ENCODE measurements at regions of chr17 and their contacts with region 1.

Region 1: DNA sequence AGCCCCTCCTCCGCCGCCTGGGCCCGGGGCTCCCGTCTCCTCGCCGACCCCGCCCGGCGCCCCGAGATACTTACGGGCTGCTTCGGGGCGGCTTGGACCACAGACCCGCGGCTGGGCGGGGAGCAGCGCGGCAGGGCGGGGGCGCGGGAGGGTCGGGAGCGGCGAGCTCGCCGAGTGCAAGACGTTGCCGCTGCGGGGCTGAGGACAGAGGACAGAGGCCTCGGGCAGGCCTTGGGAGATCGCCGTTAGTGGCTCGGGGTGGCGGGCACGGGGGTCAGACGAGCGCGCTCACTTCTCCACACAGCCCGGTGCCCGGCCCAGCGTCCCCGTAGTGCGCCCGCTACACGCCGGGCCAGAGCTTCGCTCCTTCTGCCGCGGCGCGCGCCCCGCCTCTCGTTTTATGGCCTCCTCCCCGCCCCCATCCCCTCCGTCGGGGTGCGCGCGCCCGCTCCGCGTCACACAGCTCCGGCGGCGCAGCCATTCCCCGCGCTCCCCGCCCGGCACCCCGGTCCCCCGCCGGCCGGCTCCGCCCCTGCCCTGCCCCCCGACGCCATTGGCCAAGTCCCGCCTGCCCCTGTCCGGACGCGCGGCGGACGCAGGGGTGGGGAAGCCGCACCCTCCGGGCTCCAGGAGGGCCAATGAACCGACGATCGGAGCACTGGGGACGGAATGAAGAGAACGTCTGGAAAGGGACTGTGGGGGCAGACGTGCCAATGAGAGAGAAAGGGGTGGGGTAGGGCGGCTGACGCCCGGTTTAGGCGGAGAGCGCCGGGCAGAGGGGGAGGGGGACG is at the start of gene TOB1:
- DNase-seq: peak; percentile 98
- H3K4me3 Mint-ChIP-seq: peak within 1 kb of the TSS; percentile 100
- H3K27ac Mint-ChIP-seq: peak within 1 kb of the TSS; percentile 99
- H3K4me1 Mint-ChIP-seq: peaks cover 43% of the 10 kb centered on the region
- H3K27me3 Mint-ChIP-seq: no peaks in the 10 kb centered on the region
- total RNA-seq, gene TOB1: 42.3 to 44.1 TPM

Region 2: GRCh38 chr17:50790618-50791017 is 75.6 kb before region 1 on chr17:
- CTCF ChIA-PET with region 1: no interaction called
- POLR2A ChIA-PET with region 1: no interaction called
- intact Hi-C with region 1: no loop called
- DNase-seq: no peak
- H3K4me3 Mint-ChIP-seq: no peak overlapping the region
- H3K27ac Mint-ChIP-seq: no peak overlapping the region
- H3K4me1 Mint-ChIP-seq: no peaks in the 10 kb centered on the region
- H3K27me3 Mint-ChIP-seq: no peaks in the 10 kb centered on the region

Region 3: GRCh38 chr17:50853015-50853615 is 13.1 kb before region 1 on chr17:
- CTCF ChIA-PET with region 1: interaction called, 80 read pairs
- POLR2A ChIA-PET with region 1: interaction called, 52 read pairs
- intact Hi-C with region 1: loop called (anchors 1 kb)
- DNase-seq: no peak
- H3K4me3 Mint-ChIP-seq: no peak overlapping the region
- H3K27ac Mint-ChIP-seq: no peak overlapping the region
- H3K4me1 Mint-ChIP-seq: peaks cover 14% of the 10 kb centered on the region
- H3K27me3 Mint-ChIP-seq: no peaks in the 10 kb centered on the region

Region 4: GRCh38 chr17:50909765-50910605 is 43.8 kb after region 1 on chr17:
- CTCF ChIA-PET with region 1: interaction called, 5 read pairs
- POLR2A ChIA-PET with region 1: interaction called, 44 read pairs
- intact Hi-C with region 1: loop called (anchors 1 kb)
- DNase-seq: peak; percentile 93
- H3K4me3 Mint-ChIP-seq: no peak overlapping the region
- H3K27ac Mint-ChIP-seq: peak overlapping the region; percentile 74
- H3K4me1 Mint-ChIP-seq: peaks cover 55% of the 10 kb centered on the region
- H3K27me3 Mint-ChIP-seq: no peaks in the 10 kb centered on the region

Region 5: GRCh38 chr17:50944054-50944901 is 78.1 kb after region 1 on chr17:
- CTCF ChIA-PET with region 1: interaction called, 153 read pairs
- POLR2A ChIA-PET with region 1: interaction called, 44 read pairs
- intact Hi-C with region 1: loop called (anchors 1 kb)
- DNase-seq: peak; percentile 88
- H3K4me3 Mint-ChIP-seq: peak overlapping the region; percentile 76
- H3K27ac Mint-ChIP-seq: peak overlapping the region; percentile 86
- H3K4me1 Mint-ChIP-seq: peaks cover 23% of the 10 kb centered on the region
- H3K27me3 Mint-ChIP-seq: no peaks in the 10 kb centered on the region

Region 6: DNA sequence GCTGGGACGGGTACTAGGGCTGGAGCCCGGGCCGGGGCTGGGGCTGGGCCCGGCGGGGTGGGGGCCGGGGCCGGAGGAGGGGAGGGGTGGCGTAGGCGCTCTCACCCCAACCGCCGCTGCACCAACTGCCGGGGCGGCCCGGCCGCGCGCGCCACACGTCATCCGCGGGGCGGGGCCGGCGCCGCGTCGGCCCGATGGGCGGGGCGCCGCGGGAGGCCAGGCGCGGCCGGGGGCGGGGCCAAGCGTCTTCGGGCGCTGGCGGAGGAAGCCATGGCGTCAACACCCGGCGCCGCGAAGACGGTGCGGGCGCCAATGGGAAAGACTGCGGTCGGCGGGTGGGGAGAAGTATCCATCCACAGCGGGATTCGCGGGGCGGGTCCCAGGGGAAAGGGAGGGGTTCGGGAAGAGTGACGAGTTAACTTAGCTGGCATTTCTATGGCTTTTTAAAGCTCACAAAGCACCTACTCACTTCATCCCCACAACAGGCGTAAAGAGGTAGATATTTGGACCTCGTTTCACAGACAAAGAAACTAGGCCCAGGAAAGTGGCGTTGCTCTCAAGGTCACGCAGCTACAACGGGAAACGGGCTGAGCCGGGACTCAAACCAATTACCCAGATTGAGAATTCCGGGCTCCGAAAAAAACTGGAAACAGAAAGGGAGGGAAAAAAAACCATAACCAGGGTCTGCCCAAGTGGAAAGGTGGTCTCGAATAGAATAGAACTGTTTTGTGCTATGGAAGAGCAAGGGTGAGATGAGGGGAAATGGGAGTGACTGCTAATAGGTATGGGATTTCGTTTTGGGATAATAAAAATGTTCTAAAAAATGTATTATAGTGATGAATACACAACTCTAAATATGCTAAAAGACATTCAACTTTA is 254.8 kb after region 1 on chr17 and contains the start of gene SPAG9:
- CTCF ChIA-PET with region 1: interaction called, 3 read pairs
- POLR2A ChIA-PET with region 1: interaction called, 22 read pairs
- intact Hi-C with region 1: loop called (anchors 1 kb)
- DNase-seq: peak; percentile 94
- H3K4me3 Mint-ChIP-seq: peak within 1 kb of the TSS; percentile 94
- H3K27ac Mint-ChIP-seq: peak within 1 kb of the TSS; percentile 98
- H3K4me1 Mint-ChIP-seq: peaks cover 43% of the 10 kb centered on the region
- H3K27me3 Mint-ChIP-seq: no peaks in the 10 kb centered on the region
- total RNA-seq, gene SPAG9: 58.0 to 58.7 TPM

Measured in activated CD4-positive, alpha-beta memory T cell treated with anti-CD3 and anti-CD28 coated beads for 36 hours (primary cell).